ENCODE measurements at regions of chr6 and their contacts with region 1.

Region 1: DNA sequence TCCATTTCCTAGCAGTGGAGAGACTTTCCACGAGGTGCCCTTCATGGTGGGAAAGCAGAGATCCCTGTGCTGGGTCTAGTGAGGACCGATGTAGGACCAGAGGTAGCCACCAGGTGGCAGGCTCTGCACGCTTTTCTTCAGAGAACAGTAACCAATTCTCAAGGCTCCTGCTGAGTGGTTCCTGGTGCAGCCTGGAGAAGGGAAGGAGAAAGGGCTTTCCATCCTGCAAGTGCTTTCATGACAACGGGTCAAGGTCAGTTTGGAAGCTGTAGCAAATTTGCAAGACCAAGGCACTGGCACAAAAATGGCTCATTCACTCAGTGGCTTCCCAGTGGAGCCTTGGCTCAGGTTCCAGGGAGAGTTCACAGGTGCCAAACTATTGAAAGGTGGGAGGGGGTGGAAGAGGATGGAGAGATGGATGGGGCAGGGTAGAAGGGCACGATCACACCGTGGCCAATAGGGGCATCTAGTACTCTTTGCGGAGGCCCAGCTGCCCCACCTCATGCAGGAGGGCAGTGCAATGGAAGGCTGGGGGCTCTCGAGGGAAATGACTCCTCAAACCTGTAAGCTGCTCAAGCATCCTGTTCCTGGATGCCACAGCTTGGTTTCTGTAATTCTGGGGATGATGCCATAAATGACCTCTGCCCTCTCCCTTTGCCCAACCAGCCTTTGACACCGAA is 25.5 kb upstream of the KCNK16 start:
- DNase-seq: peak; percentile 72 to 88
- H3K4me3 ChIP-seq: no peak overlapping the region
- H3K27ac ChIP-seq: no peak overlapping the region
- H3K4me1 ChIP-seq: peaks cover 0 to 6% (median 0%) of the 10 kb centered on the region in 4 donors
- H3K27me3 ChIP-seq: no peaks in the 10 kb centered on the region
- CTCF ChIP-seq: peak in 5 of 7 experiments; percentile 52 to 90 (median 83)
- EP300 ChIP-seq: no peak
- POLR2A ChIP-seq: no peak

Region 2: GRCh38 chr6:39173270-39173669 is 174.8 kb before region 1 on chr6:
- intact Hi-C with region 1: no loop called
- DNase-seq: no peak
- H3K4me3 ChIP-seq: no peak overlapping the region
- H3K27ac ChIP-seq: no peak overlapping the region
- H3K4me1 ChIP-seq: peaks cover 6 to 17% (median 8%) of the 10 kb centered on the region in 4 donors
- H3K27me3 ChIP-seq: peaks cover 0 to 3% (median 0%) of the 10 kb centered on the region in 3 donors
- CTCF ChIP-seq: no peak
- EP300 ChIP-seq: no peak
- POLR2A ChIP-seq: no peak

Region 3: DNA sequence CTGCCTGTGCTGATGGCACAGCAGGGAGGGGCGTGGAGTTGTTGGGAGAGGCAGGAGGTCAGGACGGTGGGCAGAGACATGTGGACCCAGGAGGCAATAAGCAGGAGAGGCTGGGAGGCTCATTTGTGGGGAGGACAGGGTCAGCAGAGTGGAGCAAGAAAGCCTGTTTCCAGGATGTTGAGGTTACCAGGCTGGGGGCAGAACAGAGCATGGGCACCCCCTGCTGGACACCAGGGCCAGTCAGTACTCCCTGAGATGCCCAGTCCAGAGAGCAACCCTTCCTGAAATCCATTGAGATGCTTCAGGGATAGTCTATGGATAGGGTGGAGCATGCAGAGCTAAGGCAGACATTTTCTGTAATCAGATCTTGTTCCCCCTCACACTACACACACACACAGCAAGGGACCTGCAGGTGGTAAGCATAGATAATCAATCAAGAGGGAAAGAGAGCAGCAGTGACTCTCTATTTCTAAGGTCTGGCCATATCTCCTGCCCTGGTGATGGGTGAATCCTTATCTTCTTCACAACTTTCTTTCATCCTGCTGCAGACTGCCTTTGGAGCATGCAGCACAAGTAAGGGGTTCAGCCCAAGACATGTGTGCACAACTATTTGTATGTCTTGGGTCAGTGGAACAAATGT is 544.6 kb after region 1 on chr6:
- intact Hi-C with region 1: loop called (anchors 10 kb)
- DNase-seq: peak; percentile 74 to 88
- H3K4me3 ChIP-seq: no peak overlapping the region
- H3K27ac ChIP-seq: peak overlapping the region in 1 of 5 donors; percentile 38
- H3K4me1 ChIP-seq: peaks cover 4 to 23% (median 10%) of the 10 kb centered on the region in 4 donors
- H3K27me3 ChIP-seq: no peaks in the 10 kb centered on the region
- CTCF ChIP-seq: peak in 5 of 7 experiments; percentile 50 to 78 (median 64)
- EP300 ChIP-seq: no peak
- POLR2A ChIP-seq: no peak